Panc1 (cell line): ENCODE measurements at regions of chr11 and their contacts with region 1.

Region 1: DNA sequence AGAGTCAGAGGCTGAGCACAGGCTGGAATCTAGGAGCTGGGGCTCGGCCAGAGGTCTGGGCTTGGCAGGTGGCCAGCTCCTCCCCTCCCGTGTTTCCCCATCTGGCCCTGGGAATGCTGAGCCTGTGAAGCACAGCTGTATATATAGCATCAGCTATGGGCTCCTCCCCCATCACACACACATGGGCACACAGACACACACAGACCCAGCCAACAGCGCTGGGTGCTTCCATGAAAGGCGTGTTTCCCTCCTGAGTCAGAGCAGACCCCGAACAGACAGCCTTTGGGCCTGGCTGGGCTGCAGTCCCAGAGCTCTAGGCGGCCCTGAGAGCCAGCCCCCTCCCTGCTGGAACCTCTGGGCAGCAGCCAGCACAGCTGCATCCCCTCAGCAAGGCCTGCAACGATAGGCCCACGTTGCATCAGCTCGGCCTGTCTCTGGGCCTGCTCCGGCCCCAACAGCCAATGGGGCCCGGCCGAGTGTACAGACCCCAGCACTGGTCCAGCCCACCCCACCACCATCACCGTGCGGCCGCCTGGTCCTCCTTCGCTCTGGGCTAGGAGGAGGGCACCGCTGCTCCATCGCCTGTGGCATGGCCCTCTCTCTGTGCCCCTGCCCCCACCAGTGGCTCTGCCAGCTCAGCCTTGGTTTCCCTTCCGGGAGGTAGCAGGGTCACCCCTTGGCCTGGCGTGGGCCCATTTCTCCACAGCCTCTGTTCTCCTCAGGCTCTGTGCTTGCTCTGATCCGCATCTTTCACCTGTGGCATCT is 7.6 kb upstream of the SERPINH1 start:
- DNase-seq: no peak
- ATAC-seq: peak; percentile 36; the same call in 1 of the 2 replicates
- H3K4me3 ChIP-seq: no peak overlapping the region
- H3K27ac ChIP-seq: no peak overlapping the region; the same call in 1 of the 2 replicates
- H3K4me1 ChIP-seq: peaks cover 14% of the 10 kb centered on the region; the same call in 1 of the 2 replicates
- H3K27me3 ChIP-seq: no peaks in the 10 kb centered on the region
- CTCF ChIP-seq: no peak

Region 2: DNA sequence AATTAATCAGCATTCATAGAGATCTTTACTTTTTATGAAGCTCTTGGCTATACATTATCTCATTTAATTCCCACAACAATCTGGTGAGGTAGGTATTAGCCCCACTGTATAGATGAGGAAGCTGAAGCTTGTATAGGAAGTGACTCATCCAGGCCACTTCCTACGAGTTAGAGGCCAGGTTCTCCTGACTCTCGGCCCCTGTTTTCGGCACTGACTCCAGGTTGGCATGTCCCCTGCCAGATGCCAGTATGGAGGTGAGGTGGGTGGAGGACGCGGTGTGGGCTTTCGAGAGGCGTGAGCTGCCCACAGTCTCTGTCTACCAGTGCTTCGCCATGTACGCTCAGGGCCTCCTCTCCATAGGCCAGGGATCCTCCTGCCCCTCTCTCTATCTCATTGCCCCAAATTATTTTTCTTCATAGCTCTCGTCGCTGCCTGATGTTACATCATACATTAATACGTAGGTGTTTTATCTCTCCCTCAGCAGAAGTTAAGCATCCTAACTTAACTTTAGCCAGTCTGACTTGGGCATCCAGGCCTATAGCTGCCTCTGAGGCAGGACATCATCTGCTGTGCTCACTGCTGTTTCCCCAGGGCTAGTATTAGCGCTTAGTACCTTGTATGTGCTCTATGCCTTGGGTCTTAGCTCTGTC is 223.1 kb after region 1 on chr11:
- CTCF ChIA-PET with region 1: no interaction called
- POLR2A ChIA-PET with region 1: interaction called, 15 read pairs
- in situ Hi-C with region 1: no loop called
- intact Hi-C with region 1: no loop called
- DNase-seq: no peak
- ATAC-seq: no peak
- H3K4me3 ChIP-seq: no peak overlapping the region
- H3K27ac ChIP-seq: no peak overlapping the region
- H3K4me1 ChIP-seq: no peaks in the 10 kb centered on the region
- H3K27me3 ChIP-seq: no peaks in the 10 kb centered on the region
- CTCF ChIP-seq: no peak